ENCODE measurements at regions of chr14 and their contacts with region 1.

Region 1: GRCh38 chr14:68788996-68789820 is 3.7 kb downstream of the ZFP36L1 start:
- DNase-seq: peak; percentile 94
- ATAC-seq: peak; percentile 40
- H3K4me3 Mint-ChIP-seq: peak overlapping the region; percentile 88
- H3K27ac Mint-ChIP-seq: peak overlapping the region; percentile 100
- H3K4me1 Mint-ChIP-seq: peaks cover 53% of the 10 kb centered on the region
- H3K27me3 Mint-ChIP-seq: no peaks in the 10 kb centered on the region
- CTCF ChIP-seq: peak; percentile 82

Region 2: GRCh38 chr14:68506021-68506644 is 283.1 kb before region 1 on chr14:
- CTCF ChIA-PET with region 1: interaction called, 9 read pairs
- POLR2A ChIA-PET with region 1: no interaction called
- intact Hi-C with region 1: loop called (anchors 5 kb)
- DNase-seq: no peak
- ATAC-seq: peak; percentile 9
- H3K4me3 Mint-ChIP-seq: peak overlapping the region; percentile 3
- H3K27ac Mint-ChIP-seq: peak overlapping the region; percentile 47
- H3K4me1 Mint-ChIP-seq: peaks cover 43% of the 10 kb centered on the region
- H3K27me3 Mint-ChIP-seq: no peaks in the 10 kb centered on the region
- CTCF ChIP-seq: no peak

Region 3: GRCh38 chr14:68649476-68650189 is 139.6 kb before region 1 on chr14:
- CTCF ChIA-PET with region 1: no interaction called
- POLR2A ChIA-PET with region 1: no interaction called
- intact Hi-C with region 1: no loop called
- DNase-seq: no peak
- ATAC-seq: no peak
- H3K4me3 Mint-ChIP-seq: no peak overlapping the region
- H3K27ac Mint-ChIP-seq: no peak overlapping the region
- H3K4me1 Mint-ChIP-seq: peaks cover 3% of the 10 kb centered on the region
- H3K27me3 Mint-ChIP-seq: no peaks in the 10 kb centered on the region
- CTCF ChIP-seq: no peak

Region 4: GRCh38 chr14:68663385-68664076 is 125.7 kb before region 1 on chr14:
- CTCF ChIA-PET with region 1: interaction called, 8 read pairs
- POLR2A ChIA-PET with region 1: interaction called, 6 read pairs
- intact Hi-C with region 1: loop called (anchors 2 kb)
- DNase-seq: peak; percentile 80
- ATAC-seq: peak; percentile 83
- H3K4me3 Mint-ChIP-seq: peak overlapping the region; percentile 33
- H3K27ac Mint-ChIP-seq: peak overlapping the region; percentile 84
- H3K4me1 Mint-ChIP-seq: peaks cover 49% of the 10 kb centered on the region
- H3K27me3 Mint-ChIP-seq: no peaks in the 10 kb centered on the region
- CTCF ChIP-seq: no peak

Region 5: GRCh38 chr14:68718023-68718995 is 70.9 kb before region 1 on chr14:
- CTCF ChIA-PET with region 1: interaction called, 68 read pairs
- POLR2A ChIA-PET with region 1: interaction called, 9 read pairs
- intact Hi-C with region 1: loop called (anchors 5 kb)
- DNase-seq: peak; percentile 31
- ATAC-seq: peak; percentile 41
- H3K4me3 Mint-ChIP-seq: no peak overlapping the region
- H3K27ac Mint-ChIP-seq: no peak overlapping the region
- H3K4me1 Mint-ChIP-seq: peaks cover 42% of the 10 kb centered on the region
- H3K27me3 Mint-ChIP-seq: no peaks in the 10 kb centered on the region
- CTCF ChIP-seq: peak; percentile 60

Measured in activated CD8-positive, alpha-beta T cell treated with anti-CD3 and anti-CD28 coated beads for 36 hours (primary cell).